MCF 10A (cell line): ENCODE measurements at regions of chr2 and their contacts with region 1.

Region 1: DNA sequence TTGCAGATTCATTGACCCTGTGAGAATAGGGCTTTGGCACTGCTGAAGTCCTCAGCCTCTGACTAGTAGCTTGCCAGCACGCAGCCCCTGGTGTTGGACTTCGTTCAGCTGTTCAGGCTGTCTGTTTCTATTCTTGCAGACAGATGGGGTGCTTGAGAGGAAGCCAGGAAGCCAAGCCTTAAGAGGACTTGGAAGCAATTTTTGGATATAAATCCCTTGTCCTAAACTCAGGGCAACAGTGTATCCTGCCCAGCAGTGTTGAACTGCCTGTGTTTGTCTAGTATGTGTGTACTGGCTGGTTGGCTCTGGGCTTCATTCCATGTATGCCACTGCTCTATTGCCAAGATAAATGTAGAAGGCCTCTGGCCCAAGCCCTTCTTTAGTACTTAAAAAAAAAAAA is 108.6 kb downstream of the COMMD1 start:
- DNase-seq: no peak
- H3K4me3 Mint-ChIP-seq: no peak overlapping the region
- H3K27ac Mint-ChIP-seq: no peak overlapping the region
- H3K4me1 Mint-ChIP-seq: no peaks in the 10 kb centered on the region
- H3K27me3 Mint-ChIP-seq: no peaks in the 10 kb centered on the region
- CTCF ChIP-seq: no peak

Region 2: GRCh38 chr2:61962095-61962984 is 51.8 kb before region 1 on chr2:
- CTCF ChIA-PET with region 1: no interaction called
- POLR2A ChIA-PET with region 1: no interaction called
- intact Hi-C with region 1: no loop called
- DNase-seq: no peak
- H3K4me3 Mint-ChIP-seq: no peak overlapping the region
- H3K27ac Mint-ChIP-seq: no peak overlapping the region
- H3K4me1 Mint-ChIP-seq: peaks cover 7% of the 10 kb centered on the region
- H3K27me3 Mint-ChIP-seq: no peaks in the 10 kb centered on the region
- CTCF ChIP-seq: no peak

Region 3: DNA sequence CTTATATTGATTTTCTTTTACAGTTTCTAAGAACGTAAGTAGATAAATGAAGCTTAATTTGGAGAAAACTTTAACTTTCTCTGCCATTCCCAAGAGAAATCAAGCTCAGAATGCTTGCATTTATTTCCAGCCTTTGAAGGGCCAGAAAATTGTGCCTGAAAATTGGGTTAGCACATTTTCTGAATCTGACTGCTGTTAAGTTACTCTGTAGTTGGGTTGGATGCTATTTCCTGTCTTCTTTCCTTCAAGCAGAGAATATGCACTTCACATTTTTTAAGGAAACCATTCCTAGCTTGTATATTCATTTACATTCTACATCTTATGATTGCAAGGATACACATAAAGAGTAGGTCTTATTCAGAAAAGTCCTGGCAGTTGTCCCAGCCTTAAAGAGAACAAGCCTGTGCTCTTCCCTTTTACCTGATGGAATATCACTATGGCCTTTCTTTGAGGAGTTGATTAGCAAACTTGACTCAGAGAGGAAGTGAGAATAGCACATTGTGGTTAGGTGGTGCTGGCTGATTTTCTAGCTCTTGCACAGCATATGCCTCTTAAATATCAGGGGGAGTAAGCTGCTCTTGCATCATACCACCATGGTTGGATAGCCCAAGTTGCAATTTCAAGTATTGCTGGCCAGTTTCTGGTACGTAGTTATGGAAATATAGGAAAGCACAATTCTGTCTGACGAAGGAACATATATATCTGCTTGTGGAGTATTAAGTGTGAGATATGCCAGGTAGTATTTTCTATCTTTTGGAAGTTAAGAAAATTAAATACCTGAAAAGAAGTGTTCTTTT is 25.1 kb after region 1 on chr2:
- CTCF ChIA-PET with region 1: no interaction called
- POLR2A ChIA-PET with region 1: no interaction called
- intact Hi-C with region 1: no loop called
- DNase-seq: peak; percentile 66
- H3K4me3 Mint-ChIP-seq: no peak overlapping the region
- H3K27ac Mint-ChIP-seq: no peak overlapping the region
- H3K4me1 Mint-ChIP-seq: peaks cover 5% of the 10 kb centered on the region
- H3K27me3 Mint-ChIP-seq: no peaks in the 10 kb centered on the region
- CTCF ChIP-seq: no peak

Region 4: DNA sequence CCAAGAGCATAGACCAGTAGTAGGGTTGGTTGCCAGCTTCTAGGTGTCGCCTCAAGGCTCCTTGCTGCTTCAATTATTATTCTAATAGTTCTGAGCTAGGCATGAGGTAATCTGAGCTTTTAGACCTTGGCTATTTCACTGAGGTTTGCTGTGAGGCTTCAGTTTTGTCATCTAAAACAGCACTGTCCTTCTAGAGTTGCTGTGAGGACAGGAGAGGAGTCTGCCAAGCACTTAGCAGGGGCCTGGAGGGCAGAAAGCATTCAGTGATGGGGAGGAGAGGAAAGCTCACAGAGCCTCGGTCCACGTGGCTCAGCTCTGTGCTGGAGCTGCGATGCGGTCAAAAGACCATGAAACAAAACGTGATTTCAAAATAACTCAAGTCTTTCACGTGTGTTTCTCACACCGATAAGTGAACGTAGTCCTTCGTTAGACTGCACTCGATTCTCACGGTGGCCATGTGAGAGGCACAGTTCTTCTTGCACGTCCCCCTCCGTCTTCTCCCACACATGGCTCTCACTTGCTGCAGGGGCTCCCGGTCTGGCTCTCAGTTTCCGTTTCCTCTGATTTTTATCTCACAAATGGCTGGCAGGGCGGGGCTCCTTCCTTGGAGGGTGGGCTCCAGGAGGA is 295.5 kb after region 1 on chr2:
- CTCF ChIA-PET with region 1: no interaction called
- POLR2A ChIA-PET with region 1: no interaction called
- intact Hi-C with region 1: loop called (anchors 10 kb)
- DNase-seq: no peak
- H3K4me3 Mint-ChIP-seq: no peak overlapping the region
- H3K27ac Mint-ChIP-seq: no peak overlapping the region
- H3K4me1 Mint-ChIP-seq: peaks cover 20% of the 10 kb centered on the region
- H3K27me3 Mint-ChIP-seq: no peaks in the 10 kb centered on the region
- CTCF ChIP-seq: no peak